ENCODE measurements at regions of chrX and their contacts with region 1.

Region 1: GRCh38 chrX:35625714-35626113 is 172.4 kb upstream of the MAGEB16 start:
- DNase-seq: no peak

Region 2: GRCh38 chrX:34884817-34885216 is 740.9 kb before region 1 on chrX:
- intact Hi-C with region 1: no loop called
- DNase-seq: no peak

Region 3: DNA sequence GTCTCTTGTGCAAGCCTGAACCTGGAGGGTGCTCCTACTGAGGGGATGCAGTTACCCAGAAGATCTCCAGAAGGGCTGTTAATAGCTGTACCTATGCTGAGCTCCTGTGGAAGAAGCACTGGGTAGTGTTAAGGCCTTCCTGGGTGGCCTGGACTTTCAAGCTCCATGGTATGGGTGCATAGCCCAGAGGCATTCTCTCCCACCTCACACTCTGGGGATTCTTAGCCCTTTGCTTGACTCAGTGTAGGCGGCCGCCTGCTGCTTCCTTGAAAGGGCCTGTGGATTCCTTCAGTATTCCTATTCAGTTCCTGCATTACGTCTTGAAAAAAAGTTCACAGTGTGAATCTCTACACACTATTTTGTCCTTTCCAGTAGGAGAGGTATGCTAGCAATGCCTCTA is 63.3 kb before region 1 on chrX:
- intact Hi-C with region 1: loop called in 1 of 2 experiments (anchors 2 kb)
- DNase-seq: no peak

Measured in posterior vena cava (tissue), 2 donors.